IMR-90 (cell line): ENCODE measurements at regions of chr7 and their contacts with region 1.

Region 1: GRCh38 chr7:4775250-4775847 is at the start of gene AP5Z1:
- DNase-seq: peak; percentile 96
- ATAC-seq: peak; percentile 94
- H3K4me3 ChIP-seq: peak within 1 kb of the TSS; percentile 83
- H3K27ac ChIP-seq: peak within 1 kb of the TSS; percentile 69
- H3K4me1 ChIP-seq: peaks cover 4% of the 10 kb centered on the region; the same call in 1 of the 2 replicates
- H3K27me3 ChIP-seq: no peaks in the 10 kb centered on the region
- CTCF ChIP-seq: no peak
- POLR2A ChIP-seq: peak; percentile 87
- RAD21 ChIP-seq: peak; percentile 1; the same call in 1 of the 2 replicates
- total RNA-seq, gene AP5Z1: 9.2 and 9.7 TPM in 2 replicates

Region 2: DNA sequence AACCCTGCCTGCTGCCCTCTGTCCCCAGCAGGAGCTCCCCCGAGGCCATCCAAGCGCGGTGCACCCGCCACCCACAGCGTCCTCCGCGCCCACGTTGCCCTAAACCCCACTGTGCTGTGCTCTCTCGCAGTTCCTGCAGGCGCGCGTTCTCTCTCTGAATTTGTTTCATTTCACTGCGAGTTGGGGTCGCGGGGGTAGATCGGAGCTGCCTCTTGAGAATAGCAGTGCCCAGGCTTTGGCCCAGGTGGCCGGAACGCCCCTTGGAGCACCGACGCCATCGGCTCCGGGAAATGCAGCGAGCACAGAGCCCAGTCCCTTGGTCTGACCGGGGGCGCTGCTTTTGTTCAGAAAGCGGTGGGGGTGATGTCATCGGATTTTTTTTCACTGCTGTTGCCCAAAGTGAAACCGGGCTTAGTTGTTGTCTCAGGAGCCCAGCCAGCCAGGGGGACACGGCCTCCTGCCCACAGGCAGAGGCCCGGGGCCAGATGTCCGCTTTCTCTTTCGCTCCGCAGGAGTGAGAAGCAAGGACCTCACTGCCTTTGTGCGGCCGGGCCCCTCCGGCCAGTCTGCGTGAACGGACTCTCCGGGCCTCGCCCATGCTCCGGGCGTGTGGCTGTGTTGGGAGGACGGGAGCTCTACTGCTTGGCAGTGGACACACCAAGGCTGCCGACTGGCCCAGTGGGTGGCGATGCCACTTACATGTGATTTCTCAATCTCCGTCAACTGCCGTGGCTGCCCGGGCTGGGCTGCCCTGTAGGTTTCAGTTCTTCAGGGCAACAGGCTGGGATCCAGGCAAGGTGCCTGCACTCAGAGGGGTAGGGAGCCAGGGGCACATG is 50.1 kb before region 1 on chr7:
- CTCF ChIA-PET with region 1: no interaction called
- POLR2A ChIA-PET with region 1: no interaction called
- dilution Hi-C with region 1: no loop called
- in situ Hi-C with region 1: no loop called
- intact Hi-C with region 1: loop called (anchors 1 kb)
- DNase-seq: peak; percentile 95
- ATAC-seq: peak; percentile 83
- H3K4me3 ChIP-seq: peak overlapping the region; percentile 53
- H3K27ac ChIP-seq: peak overlapping the region; percentile 87
- H3K4me1 ChIP-seq: peaks cover 12% of the 10 kb centered on the region
- H3K27me3 ChIP-seq: no peaks in the 10 kb centered on the region
- CTCF ChIP-seq: no peak
- POLR2A ChIP-seq: peak; percentile 77; the same call in 1 of the 2 replicates
- RAD21 ChIP-seq: peak; percentile 7; the same call in 1 of the 2 replicates

Region 3: GRCh38 chr7:5177060-5177459 is 401.7 kb after region 1 on chr7:
- CTCF ChIA-PET with region 1: no interaction called
- POLR2A ChIA-PET with region 1: no interaction called
- dilution Hi-C with region 1: no loop called
- in situ Hi-C with region 1: no loop called
- intact Hi-C with region 1: no loop called
- DNase-seq: peak; percentile 87
- ATAC-seq: peak; percentile 79
- H3K4me3 ChIP-seq: no peak overlapping the region
- H3K27ac ChIP-seq: no peak overlapping the region
- H3K4me1 ChIP-seq: no peaks in the 10 kb centered on the region
- H3K27me3 ChIP-seq: no peaks in the 10 kb centered on the region; the same call in 1 of the 2 replicates
- CTCF ChIP-seq: no peak
- POLR2A ChIP-seq: no peak
- RAD21 ChIP-seq: no peak